ENCODE measurements at regions of chr20 and their contacts with region 1.

Region 1: GRCh38 chr20:46307139-46307998 is 929 bp downstream of the CDH22 start:
- DNase-seq: peak; percentile 79 to 85 (median 84)
- H3K4me3 ChIP-seq: peak overlapping the region in 5 of 7 experiments; percentile 16 to 67 (median 64)
- H3K27ac ChIP-seq: no peak overlapping the region
- H3K4me1 ChIP-seq: peaks cover 0 to 30% (median 22%) of the 10 kb centered on the region in 4 experiments
- H3K27me3 ChIP-seq: peaks cover 21 to 78% (median 35%) of the 10 kb centered on the region in 5 experiments

Region 2: DNA sequence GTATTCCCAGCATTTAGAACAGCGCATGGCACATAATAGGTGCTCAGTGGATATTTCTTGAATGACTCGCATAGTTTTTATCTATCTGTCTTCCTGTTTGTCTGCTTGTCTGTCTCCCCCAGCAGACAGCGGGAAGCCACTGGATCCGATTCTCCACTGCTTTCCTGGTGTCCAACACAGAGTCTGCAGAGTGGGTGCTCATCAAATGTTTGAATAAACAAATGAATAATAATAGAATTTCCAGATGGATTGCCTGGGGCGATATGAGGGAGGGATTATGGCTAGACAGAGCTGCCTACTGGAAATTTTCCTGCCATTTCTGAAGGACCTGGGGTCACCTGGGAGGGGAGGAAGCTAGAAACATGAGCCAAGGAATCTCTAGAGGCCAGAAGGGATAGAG is 17.9 kb before region 1 on chr20:
- CTCF ChIA-PET with region 1: interaction called, 18 read pairs
- POLR2A ChIA-PET with region 1: no interaction called
- DNase-seq: no peak
- H3K4me3 ChIP-seq: no peak overlapping the region
- H3K27ac ChIP-seq: no peak overlapping the region
- H3K4me1 ChIP-seq: no peaks in the 10 kb centered on the region
- H3K27me3 ChIP-seq: peaks cover 0 to 71% (median 11%) of the 10 kb centered on the region in 5 experiments

Region 3: DNA sequence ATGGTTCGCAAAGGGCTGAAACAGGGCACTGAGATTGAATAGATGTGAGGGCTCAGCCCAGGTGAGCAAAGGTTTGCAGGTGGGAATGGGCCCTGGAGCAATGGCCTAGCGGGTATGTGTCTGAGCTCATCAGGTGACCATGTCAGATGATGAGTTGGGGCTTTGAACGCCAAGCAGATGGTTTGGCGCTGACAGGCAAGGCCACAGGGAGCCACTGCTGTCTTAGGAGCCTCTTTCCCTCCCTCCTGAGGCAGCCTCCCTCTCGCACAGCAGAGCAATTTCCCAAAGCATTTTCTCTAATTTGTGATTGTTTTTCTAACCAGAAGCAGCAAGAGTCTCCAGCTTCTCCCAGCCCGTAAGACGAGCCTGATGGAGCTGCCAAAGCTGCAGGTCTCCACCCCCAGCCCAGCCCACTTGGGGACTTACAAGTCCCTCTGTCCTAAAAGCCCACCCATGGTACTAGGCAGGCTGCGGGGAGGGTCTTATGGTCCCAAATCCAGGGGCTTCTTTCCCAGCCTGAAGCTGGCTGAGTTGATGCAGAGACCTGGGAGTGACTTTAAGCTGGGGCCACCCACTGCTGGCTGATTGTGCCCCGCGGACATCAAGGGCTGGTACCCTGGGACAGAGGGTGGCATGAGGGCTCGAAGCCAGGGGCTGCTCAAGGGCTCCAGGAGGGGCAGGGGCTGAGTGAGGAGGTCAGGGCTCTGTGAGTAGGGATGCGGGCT is 10.7 kb before region 1 on chr20:
- CTCF ChIA-PET with region 1: interaction called, 11 read pairs
- POLR2A ChIA-PET with region 1: no interaction called
- DNase-seq: no peak
- H3K4me3 ChIP-seq: no peak overlapping the region
- H3K27ac ChIP-seq: no peak overlapping the region
- H3K4me1 ChIP-seq: no peaks in the 10 kb centered on the region
- H3K27me3 ChIP-seq: peaks cover 4 to 55% (median 10%) of the 10 kb centered on the region in 5 experiments

Region 4: DNA sequence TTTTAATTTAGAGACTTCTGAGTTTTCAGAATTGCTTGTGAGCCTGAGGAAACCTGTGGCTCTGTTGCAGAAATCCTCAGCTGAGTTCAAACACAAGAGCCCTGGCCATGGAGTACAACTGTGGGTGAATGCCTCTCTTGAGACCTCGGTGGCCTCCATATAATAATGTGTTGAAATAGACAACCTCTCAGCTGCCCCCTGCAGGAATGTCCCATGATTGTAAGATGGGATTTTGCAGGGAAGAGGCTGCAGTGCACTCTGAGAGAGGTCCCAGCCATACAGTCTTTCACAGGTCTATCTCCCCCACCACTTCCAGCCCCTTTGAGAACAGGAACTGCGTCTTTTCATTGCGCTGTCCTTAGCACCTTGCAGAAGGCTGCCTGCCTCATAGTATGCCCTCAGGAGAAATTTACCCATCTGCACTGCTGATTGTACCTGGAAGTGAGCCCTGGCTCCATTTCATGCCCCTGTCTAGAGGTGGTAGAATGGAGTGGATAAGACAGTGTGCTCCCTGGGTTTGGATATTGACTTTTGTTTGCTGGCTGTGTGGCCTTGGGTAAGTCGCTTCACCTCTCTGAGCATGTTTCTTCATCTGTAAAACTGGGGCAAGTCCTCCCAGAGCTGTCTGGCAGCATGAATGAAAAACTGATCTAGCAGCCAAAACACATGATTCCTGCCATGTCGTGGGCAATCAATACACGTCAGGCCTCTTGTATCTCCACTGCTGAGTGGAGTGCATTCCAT is 17.8 kb after region 1 on chr20:
- CTCF ChIA-PET with region 1: interaction called, 10 read pairs
- POLR2A ChIA-PET with region 1: no interaction called
- DNase-seq: peak; percentile 43 to 62 (median 58)
- H3K4me3 ChIP-seq: no peak overlapping the region
- H3K27ac ChIP-seq: no peak overlapping the region
- H3K4me1 ChIP-seq: peaks cover 0 to 1% (median 0%) of the 10 kb centered on the region in 4 experiments
- H3K27me3 ChIP-seq: peaks cover 0 to 17% (median 4%) of the 10 kb centered on the region in 5 experiments

Region 5: DNA sequence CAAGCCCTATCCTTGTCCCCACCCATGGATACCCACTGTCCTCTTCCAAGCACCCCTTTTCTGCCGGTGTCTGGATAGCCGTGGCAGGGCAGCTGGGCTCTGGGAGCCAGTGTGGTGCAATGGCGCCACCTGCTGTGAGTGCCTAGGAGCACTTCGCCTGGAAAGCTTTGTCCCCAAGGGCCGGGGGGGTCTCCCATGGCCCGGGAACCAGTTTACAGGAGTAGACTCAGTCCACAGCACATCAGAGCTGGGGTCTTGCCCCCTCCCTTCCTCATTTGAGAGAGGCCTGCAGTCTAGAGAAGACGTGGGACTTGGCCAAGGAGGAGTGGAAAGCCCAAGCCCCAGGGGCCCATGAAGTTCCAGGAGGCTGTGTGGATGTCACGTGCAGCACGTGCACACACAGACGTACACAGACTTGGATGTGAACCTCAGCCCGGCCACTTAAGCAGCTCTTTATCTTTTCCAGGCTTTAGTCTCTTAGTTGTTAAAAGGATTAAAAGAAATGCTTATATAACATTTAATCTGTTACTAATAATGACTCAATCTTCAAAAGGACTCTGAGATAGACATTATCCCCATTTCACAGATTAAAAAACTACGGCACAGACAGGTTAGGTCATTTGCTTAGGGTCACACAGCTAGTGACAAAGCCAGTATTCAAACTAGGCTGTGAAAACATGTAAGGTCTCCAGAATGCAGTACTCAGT is 41.8 kb after region 1 on chr20:
- CTCF ChIA-PET with region 1: interaction called, 28 read pairs
- POLR2A ChIA-PET with region 1: no interaction called
- DNase-seq: peak; percentile 48 to 64 (median 58)
- H3K4me3 ChIP-seq: no peak overlapping the region
- H3K27ac ChIP-seq: no peak overlapping the region
- H3K4me1 ChIP-seq: peaks cover 0 to 19% (median 12%) of the 10 kb centered on the region in 4 experiments
- H3K27me3 ChIP-seq: peaks cover 0 to 3% (median 0%) of the 10 kb centered on the region in 5 experiments

Region 6: GRCh38 chr20:46438156-46438750 is 130.9 kb after region 1 on chr20:
- CTCF ChIA-PET with region 1: interaction called, 16 read pairs
- POLR2A ChIA-PET with region 1: no interaction called
- DNase-seq: peak; percentile 54 to 78 (median 70)
- H3K4me3 ChIP-seq: no peak overlapping the region
- H3K27ac ChIP-seq: no peak overlapping the region
- H3K4me1 ChIP-seq: no peaks in the 10 kb centered on the region
- H3K27me3 ChIP-seq: no peaks in the 10 kb centered on the region

Measured in common myeloid progenitor, CD34-positive (primary cell).